Panc1 (cell line): ENCODE measurements at regions of chr5 and their contacts with region 1.

Region 1: DNA sequence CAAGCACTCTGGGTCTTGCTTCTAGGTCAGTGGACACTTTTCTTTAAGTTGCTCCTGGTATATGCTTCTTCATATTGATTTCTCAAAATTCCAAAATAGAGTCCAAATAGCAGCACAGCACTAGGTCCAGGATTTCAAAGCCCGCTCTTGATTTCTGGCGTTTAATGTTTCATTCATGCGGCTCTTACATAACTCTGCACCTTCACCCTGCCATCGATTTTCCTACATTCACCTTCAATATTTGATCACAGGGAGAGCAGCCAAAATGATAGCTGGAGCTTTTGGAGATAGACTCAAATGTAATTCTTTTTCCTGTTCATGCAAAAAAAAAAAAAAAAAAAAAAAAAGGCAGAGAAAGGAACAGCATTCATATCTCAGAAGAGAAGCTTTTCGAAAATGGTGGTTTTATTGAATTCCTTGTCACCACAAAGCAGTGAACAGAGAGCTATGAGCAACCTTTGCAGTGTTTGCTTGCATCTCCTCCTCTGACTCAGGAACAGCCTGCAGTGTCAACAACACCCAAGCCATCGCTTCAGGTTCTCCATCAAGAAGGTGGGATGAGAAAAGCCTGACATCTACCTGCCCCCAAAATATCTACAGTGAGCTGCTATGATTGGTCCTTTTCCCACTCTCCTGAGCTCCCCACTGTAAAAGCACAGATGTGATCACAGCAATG is 97.8 kb downstream of the MED10 start:
- DNase-seq: no peak
- ATAC-seq: no peak
- H3K4me3 ChIP-seq: no peak overlapping the region
- H3K27ac ChIP-seq: no peak overlapping the region
- H3K4me1 ChIP-seq: no peaks in the 10 kb centered on the region
- H3K27me3 ChIP-seq: peaks cover 9% of the 10 kb centered on the region
- CTCF ChIP-seq: no peak

Region 2: DNA sequence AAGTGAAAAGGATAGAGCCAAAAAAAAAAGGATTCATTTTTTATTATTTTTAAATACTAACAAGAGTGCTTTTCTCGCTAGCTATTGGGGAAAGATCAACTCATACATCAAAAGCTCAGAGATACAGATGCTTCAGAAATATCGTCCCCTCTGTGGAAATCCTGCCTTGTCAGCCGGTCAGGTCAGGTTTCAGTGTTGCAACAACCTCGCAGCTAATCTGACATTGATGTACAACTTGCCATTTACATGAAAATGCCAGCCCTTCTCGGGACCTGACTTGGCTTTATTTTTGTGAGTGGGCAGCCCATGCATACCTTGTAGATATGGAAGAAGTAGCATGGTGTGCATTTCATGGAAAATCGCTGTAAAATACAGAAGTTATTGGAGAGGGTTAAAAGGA is 1499.3 kb before region 1 on chr5:
- CTCF ChIA-PET with region 1: no interaction called
- POLR2A ChIA-PET with region 1: interaction called, 10 read pairs
- in situ Hi-C with region 1: no loop called
- intact Hi-C with region 1: no loop called
- DNase-seq: no peak
- ATAC-seq: no peak
- H3K4me3 ChIP-seq: no peak overlapping the region
- H3K27ac ChIP-seq: no peak overlapping the region
- H3K4me1 ChIP-seq: no peaks in the 10 kb centered on the region
- H3K27me3 ChIP-seq: no peaks in the 10 kb centered on the region
- CTCF ChIP-seq: no peak

Region 3: DNA sequence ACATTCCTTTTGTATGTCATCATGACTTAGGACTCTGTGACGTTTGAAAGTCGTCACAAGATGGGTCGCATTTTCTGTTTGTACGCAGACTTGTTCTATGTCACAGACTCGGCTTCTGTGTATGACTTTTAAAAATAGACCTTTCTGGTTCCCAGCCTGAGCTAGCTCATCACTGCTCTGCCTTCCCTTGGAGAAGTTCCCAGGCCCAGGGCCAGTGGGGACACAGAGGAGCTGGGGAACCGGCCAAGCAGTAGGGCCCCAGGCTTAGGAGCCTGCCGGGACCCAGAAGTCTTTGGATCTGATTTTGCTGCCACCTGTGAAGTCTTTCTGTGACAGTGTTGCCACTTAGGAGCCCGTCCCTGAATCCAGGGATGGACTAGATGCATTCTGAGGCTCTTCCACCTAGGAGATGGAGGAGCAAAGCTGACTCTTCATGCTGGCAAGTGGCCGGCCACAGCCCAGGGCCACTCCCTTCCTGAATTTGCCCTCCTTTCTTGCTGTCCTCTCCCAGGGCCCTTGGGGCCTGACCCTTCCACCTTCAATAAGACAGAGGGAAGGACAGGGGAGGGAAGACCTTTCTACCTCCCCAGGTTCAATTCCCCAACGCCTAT is 150.0 kb after region 1 on chr5:
- CTCF ChIA-PET with region 1: no interaction called
- POLR2A ChIA-PET with region 1: no interaction called
- in situ Hi-C with region 1: no loop called
- intact Hi-C with region 1: no loop called
- DNase-seq: no peak
- ATAC-seq: no peak
- H3K4me3 ChIP-seq: no peak overlapping the region
- H3K27ac ChIP-seq: no peak overlapping the region
- H3K4me1 ChIP-seq: no peaks in the 10 kb centered on the region
- H3K27me3 ChIP-seq: peaks cover 16% of the 10 kb centered on the region
- CTCF ChIP-seq: no peak